Thyroid gland (tissue), 4 donors: ENCODE measurements at regions of chr15 and their contacts with region 1.

Region 1: DNA sequence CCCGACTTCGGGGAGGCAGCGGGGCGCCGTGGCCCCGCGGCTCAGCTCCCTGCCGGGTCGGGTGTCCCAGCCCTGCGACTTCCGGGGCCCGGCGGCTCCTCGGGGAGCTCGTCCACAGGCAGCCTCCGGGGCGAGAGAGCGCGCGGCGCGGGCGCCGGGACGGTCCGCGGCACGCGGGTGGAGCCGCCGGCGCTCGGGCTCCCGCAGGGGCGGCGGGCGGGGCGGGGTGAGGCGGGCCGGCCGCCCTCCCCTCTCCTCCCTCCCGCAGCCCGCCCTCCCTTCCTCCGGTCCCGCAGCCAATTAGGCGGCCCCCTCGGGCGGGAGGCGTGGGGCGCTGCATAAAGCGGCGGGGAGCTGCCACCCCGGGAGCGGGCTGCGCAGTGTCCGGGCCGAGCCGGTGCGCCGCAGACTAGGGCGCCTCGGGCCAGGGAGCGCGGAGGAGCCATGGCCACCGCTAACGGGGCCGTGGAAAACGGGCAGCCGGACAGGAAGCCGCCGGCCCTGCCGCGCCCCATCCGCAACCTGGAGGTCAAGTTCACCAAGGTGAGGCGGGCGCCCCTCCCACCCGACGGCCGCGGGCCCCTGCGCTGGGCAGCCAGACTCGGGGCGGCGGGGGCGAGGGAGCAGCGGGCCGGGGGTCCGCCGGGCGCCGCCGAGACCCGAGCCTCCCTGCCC is at the start of gene ALDH1A3:
- DNase-seq: peak; percentile 15 to 19
- H3K4me3 ChIP-seq: peak within 1 kb of the TSS in 1 of 3 donors; percentile 34
- H3K27ac ChIP-seq: no peak within 1 kb of the TSS
- H3K4me1 ChIP-seq: peaks cover 0 to 15% of the 10 kb centered on the region in 2 donors
- H3K27me3 ChIP-seq: peaks cover 3% of the 10 kb centered on the region
- CTCF ChIP-seq: no peak
- POLR2A ChIP-seq: peak in 1 of 2 donors; percentile 28
- total RNA-seq, gene ALDH1A3: 7.1 to 17.9 (median 8.5) TPM

Region 2: GRCh38 chr15:100627789-100628395 is 251.7 kb before region 1 on chr15:
- intact Hi-C with region 1: loop called (anchors 5 kb)
- DNase-seq: peak; percentile 58 to 64
- H3K4me3 ChIP-seq: no peak overlapping the region
- H3K27ac ChIP-seq: no peak overlapping the region
- H3K4me1 ChIP-seq: no peaks in the 10 kb centered on the region
- H3K27me3 ChIP-seq: no peaks in the 10 kb centered on the region
- CTCF ChIP-seq: peak; percentile 65 to 84 (median 74)
- POLR2A ChIP-seq: no peak